ENCODE measurements at regions of chr2 and their contacts with region 1.

Region 1: GRCh38 chr2:217075268-217076057 is 215.6 kb upstream of the TNP1 start:
- DNase-seq: no peak
- H3K4me3 Mint-ChIP-seq: no peak overlapping the region
- H3K27ac Mint-ChIP-seq: no peak overlapping the region
- H3K4me1 Mint-ChIP-seq: peaks cover 10% of the 10 kb centered on the region
- H3K27me3 Mint-ChIP-seq: no peaks in the 10 kb centered on the region
- CTCF ChIP-seq: no peak

Region 2: GRCh38 chr2:217105733-217106649 is 30.5 kb after region 1 on chr2:
- CTCF ChIA-PET with region 1: interaction called, 10 read pairs
- intact Hi-C with region 1: no loop called
- DNase-seq: peak; percentile 66
- H3K4me3 Mint-ChIP-seq: no peak overlapping the region
- H3K27ac Mint-ChIP-seq: peak overlapping the region; percentile 90
- H3K4me1 Mint-ChIP-seq: peaks cover 65% of the 10 kb centered on the region
- H3K27me3 Mint-ChIP-seq: no peaks in the 10 kb centered on the region
- CTCF ChIP-seq: no peak

Region 3: DNA sequence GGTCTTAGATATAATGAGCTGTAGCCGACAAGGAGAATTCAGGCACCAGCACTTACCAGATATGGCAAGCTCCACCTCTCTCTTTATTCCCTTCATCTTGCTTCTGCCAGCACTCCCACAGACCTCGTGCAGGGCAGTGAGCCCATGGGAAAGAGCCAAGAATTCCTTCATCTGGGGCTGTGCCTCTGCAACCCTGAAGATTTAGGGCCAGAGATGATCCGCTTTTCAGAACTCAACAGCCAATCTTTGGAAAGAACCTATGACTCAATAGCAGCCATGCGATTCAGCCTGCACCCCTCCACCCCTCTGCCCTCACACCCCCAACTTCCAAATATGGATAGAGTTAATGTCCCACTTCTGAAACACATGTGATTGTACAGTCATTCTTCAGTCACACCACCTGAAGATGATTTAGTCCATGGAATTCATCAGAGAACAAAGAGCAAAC is 318.1 kb after region 1 on chr2:
- CTCF ChIA-PET with region 1: no interaction called
- intact Hi-C with region 1: no loop called
- DNase-seq: no peak
- H3K4me3 Mint-ChIP-seq: no peak overlapping the region
- H3K27ac Mint-ChIP-seq: no peak overlapping the region
- H3K4me1 Mint-ChIP-seq: peaks cover 20% of the 10 kb centered on the region
- H3K27me3 Mint-ChIP-seq: no peaks in the 10 kb centered on the region
- CTCF ChIP-seq: no peak